ENCODE measurements at regions of chr2 and their contacts with region 1.

Region 1: GRCh38 chr2:50872543-50872942 is 159.4 kb downstream of the NRXN1 start:
- DNase-seq: no peak
- H3K4me3 ChIP-seq: no peak overlapping the region
- H3K27ac ChIP-seq: no peak overlapping the region
- H3K4me1 ChIP-seq: no peaks in the 10 kb centered on the region
- H3K27me3 ChIP-seq: no peaks in the 10 kb centered on the region
- CTCF ChIP-seq: no peak
- POLR2A ChIP-seq: no peak

Region 2: DNA sequence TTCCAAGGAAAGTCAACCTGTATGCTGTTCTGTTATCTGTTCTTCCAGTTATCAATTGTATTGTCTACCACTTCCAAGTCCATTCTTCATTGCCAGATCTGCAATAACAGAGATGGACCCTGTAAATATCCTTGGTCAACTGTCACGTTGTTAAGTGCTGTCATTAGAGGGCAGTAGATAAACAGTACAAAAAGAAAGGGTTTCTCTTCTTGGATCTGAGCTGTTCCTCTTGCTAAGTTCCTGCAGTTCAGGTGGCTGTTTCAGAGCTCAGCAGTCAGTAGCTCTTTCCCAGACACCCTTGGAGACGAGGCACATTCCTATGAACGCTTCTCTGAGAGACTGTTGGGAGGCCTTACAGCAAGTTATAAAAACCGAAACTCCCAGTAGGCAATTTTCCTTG is 1937.9 kb after region 1 on chr2:
- intact Hi-C with region 1: loop called (anchors 10 kb)
- DNase-seq: no peak
- H3K4me3 ChIP-seq: no peak overlapping the region
- H3K27ac ChIP-seq: no peak overlapping the region
- H3K4me1 ChIP-seq: no peaks in the 10 kb centered on the region
- H3K27me3 ChIP-seq: no peaks in the 10 kb centered on the region
- CTCF ChIP-seq: peak in 2 of 3 donors; percentile 12 to 20
- POLR2A ChIP-seq: no peak

Measured in breast epithelium (tissue), 4 donors.